ENCODE measurements at regions of chr19 and their contacts with region 1.

Region 1: GRCh38 chr19:49421039-49421877 is 2.0 kb downstream of the PTH2 start:
- DNase-seq: no peak
- ATAC-seq: peak in 1 of 2 experiments; percentile 4; a peak in 2 of 6 replicates
- H3K4me3 ChIP-seq: peak overlapping the region; percentile 21; the same call in 1 of the 3 replicates
- H3K27ac ChIP-seq: no peak overlapping the region
- H3K4me1 ChIP-seq: peaks cover 21% of the 10 kb centered on the region
- CTCF ChIP-seq: no peak
- EP300 ChIP-seq: no peak
- POLR2A ChIP-seq: no peak
- RAD21 ChIP-seq: no peak

Region 2: GRCh38 chr19:49331616-49332055 is 89.6 kb before region 1 on chr19:
- CTCF ChIA-PET with region 1: no interaction called
- POLR2A ChIA-PET with region 1: no interaction called
- DNase-seq: peak; percentile 60 to 77
- ATAC-seq: peak; percentile 84 to 91
- H3K4me3 ChIP-seq: no peak overlapping the region
- H3K27ac ChIP-seq: no peak overlapping the region
- H3K4me1 ChIP-seq: no peaks in the 10 kb centered on the region
- CTCF ChIP-seq: no peak
- EP300 ChIP-seq: no peak
- POLR2A ChIP-seq: no peak
- RAD21 ChIP-seq: no peak

Region 3: DNA sequence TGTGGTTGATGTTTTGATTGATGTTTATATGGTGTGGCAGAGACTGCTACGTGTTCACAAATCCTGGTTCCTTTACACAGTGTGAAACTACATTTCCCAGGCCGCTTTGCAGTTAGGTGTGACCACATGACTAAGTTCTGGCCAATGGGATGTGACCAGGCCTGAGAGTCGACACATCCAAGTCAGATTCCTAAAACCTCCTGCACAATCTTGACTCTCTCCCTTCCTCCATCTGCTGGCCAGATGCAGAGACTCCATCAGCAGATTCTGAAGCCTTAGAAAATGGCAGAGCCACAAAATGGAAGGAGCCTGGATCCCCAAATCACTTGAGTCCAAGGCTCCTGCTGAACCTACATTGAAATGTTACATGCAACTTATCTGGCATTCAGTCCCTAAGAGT is 73.4 kb before region 1 on chr19:
- CTCF ChIA-PET with region 1: no interaction called
- POLR2A ChIA-PET with region 1: no interaction called
- DNase-seq: peak; percentile 81 to 92
- ATAC-seq: peak; percentile 88 to 97
- H3K4me3 ChIP-seq: no peak overlapping the region
- H3K27ac ChIP-seq: no peak overlapping the region
- H3K4me1 ChIP-seq: no peaks in the 10 kb centered on the region
- CTCF ChIP-seq: no peak; the same call in 2 of the 3 replicates
- EP300 ChIP-seq: no peak
- POLR2A ChIP-seq: no peak
- RAD21 ChIP-seq: no peak

Region 4: DNA sequence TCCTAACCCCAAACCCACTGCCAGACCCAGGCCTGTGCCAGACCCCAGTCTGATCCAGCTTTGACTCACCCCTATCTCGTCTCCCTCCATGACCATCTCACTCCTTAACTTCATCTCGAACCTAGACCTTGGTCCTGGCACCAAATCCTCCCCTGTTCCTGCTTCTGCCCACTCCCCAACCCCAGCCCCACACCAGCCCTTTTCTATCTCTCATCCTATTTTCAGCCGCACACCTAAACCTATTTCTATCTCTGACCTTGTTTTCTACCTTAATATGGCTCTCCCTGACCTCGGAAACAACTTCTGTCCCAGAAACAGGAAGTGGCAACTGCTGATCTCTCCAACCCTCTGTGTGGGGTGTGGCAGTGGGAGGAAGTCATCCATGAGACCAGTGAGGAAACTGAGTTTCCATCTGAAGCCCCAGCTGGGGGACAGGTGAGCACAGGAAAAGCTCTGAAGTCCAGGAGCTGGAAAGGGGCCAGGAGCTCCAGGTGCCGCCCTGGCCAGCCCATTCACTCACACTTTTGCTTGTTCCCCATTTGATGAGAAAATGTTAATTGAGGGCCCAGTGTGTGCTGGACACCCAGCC is 11.7 kb before region 1 on chr19:
- CTCF ChIA-PET with region 1: interaction called, 17 read pairs
- POLR2A ChIA-PET with region 1: interaction called, 4 read pairs
- DNase-seq: no peak
- ATAC-seq: no peak
- H3K4me3 ChIP-seq: no peak overlapping the region
- H3K27ac ChIP-seq: no peak overlapping the region
- H3K4me1 ChIP-seq: no peaks in the 10 kb centered on the region
- CTCF ChIP-seq: no peak
- EP300 ChIP-seq: no peak
- POLR2A ChIP-seq: no peak
- RAD21 ChIP-seq: no peak

Region 5: DNA sequence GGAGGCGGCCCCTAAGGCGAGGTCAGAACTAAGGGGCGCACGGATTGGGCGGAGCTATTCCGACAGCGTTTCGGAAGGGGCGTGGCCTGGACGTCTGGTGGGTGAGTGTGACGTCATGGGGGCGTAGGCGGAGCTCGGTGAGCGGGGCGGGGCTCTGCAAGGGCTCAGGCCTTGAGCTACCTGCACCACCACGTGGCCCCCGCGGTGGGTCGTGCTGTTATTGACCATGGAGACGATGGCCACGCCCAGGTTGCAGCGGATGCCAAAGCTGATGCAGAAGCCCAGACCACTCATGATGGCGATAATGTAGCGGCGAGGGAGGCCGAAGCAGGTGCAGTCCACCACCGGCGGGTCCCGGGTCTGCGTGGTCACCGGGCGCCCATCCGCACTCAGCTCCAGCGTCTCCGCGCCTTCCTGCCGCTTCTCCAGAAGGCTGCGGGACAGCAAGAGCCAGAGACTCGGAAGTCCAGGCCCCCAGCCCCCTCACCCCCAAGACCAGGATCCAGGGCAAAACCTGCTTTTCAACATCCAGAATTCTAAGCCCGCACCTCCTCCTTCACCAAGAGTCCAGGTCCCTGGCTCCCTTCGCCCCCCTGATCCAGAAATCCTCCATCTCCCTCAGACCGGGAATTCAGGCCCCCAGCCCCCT is 15.2 kb after region 1 on chr19:
- CTCF ChIA-PET with region 1: interaction called, 30 read pairs
- POLR2A ChIA-PET with region 1: no interaction called
- DNase-seq: peak in 1 of 2 experiments; percentile 64
- ATAC-seq: peak; percentile 14 to 15; a peak in 3 of 6 replicates
- H3K4me3 ChIP-seq: no peak overlapping the region
- H3K27ac ChIP-seq: no peak overlapping the region
- H3K4me1 ChIP-seq: peaks cover 8% of the 10 kb centered on the region
- CTCF ChIP-seq: no peak
- EP300 ChIP-seq: no peak
- POLR2A ChIP-seq: no peak
- RAD21 ChIP-seq: no peak

Region 6: DNA sequence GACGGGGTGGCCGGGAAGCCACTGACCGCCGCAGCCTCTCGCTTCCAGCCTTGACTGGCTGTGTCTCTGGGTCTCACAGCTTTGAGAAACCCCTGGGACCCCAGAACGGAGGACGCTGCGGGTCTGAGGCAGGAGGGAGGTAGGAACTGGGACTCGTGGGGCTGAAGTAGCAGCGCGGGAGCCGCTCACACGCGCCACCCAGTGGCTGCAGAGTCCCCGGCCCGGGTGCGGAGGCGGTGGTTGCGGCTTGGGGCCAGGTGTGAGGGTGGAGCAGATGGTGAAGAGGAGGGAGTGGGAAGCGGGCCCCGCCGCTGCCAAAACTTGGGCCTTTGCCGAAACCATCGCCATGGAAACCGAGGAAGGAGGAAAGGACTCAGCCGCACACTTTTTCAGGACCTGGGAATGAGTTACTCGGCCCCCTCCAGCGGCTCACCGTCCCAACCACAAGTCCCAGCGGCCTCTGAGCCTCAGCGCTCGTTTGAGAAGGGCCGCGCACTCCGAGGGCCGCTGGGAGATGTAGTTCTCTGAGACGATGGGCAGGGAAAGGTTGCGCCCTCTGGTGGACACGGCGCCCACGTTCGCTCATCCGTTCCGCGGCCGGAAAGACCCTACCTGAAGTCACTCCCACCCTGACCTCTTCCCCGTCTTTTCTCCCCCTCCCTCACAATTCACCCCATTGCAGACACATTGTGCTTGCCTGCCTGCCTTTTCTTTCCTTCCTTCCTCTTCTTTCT is 22.3 kb after region 1 on chr19:
- CTCF ChIA-PET with region 1: interaction called, 26 read pairs
- POLR2A ChIA-PET with region 1: no interaction called
- DNase-seq: peak; percentile 94 to 97
- ATAC-seq: peak; percentile 72 to 85
- H3K4me3 ChIP-seq: peak overlapping the region; percentile 79
- H3K27ac ChIP-seq: peak overlapping the region; percentile 85 to 89
- H3K4me1 ChIP-seq: peaks cover 19% of the 10 kb centered on the region
- CTCF ChIP-seq: peak; percentile 97
- EP300 ChIP-seq: no peak
- POLR2A ChIP-seq: peak; percentile 21; the same call in 1 of the 2 replicates
- RAD21 ChIP-seq: peak; percentile 64 to 82